ENCODE measurements at regions of chr3 and their contacts with region 1.

Region 1: DNA sequence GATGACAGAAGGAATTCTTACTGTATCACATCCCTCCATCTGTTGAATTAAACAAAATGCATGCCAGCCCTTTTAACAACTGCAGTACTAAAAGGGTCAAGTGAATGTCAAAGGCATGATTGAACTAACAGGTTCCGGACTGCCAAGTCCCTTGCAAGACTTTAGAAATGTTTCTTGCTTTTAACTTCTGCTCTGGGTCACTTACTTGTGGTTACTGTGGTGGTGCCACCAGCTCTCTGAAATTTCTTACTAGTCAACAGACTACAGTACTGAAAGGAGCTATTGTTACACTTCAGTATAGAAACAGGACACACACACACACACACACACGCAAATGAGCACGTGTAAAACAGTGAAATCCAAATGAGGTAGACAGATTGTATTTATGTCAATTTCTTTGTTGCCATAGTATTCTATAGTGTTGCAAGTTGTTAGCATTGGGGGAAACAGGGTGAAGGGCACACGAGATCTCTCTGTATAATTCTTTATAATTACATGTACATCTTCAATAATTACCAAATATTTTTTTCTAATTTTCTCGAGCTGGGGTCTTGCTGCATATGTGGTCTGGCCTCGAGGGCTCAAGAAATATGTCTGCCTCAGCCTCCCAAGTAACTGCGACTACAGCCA is 79.9 kb upstream of the SLC25A26 start:
- DNase-seq: no peak
- ATAC-seq: no peak
- H3K4me3 ChIP-seq: no peak overlapping the region
- H3K27ac ChIP-seq: no peak overlapping the region
- H3K4me1 ChIP-seq: no peaks in the 10 kb centered on the region
- H3K27me3 ChIP-seq: no peaks in the 10 kb centered on the region
- CTCF ChIP-seq: no peak

Region 2: GRCh38 chr3:65561617-65562016 is 579.2 kb before region 1 on chr3:
- intact Hi-C with region 1: no loop called
- DNase-seq: no peak
- ATAC-seq: no peak
- H3K4me3 ChIP-seq: no peak overlapping the region
- H3K27ac ChIP-seq: no peak overlapping the region
- H3K4me1 ChIP-seq: no peaks in the 10 kb centered on the region
- H3K27me3 ChIP-seq: no peaks in the 10 kb centered on the region
- CTCF ChIP-seq: no peak

Region 3: GRCh38 chr3:65785065-65785645 is 355.7 kb before region 1 on chr3:
- intact Hi-C with region 1: loop called (anchors 10 kb)
- DNase-seq: no peak
- ATAC-seq: peak; percentile 60
- H3K4me3 ChIP-seq: no peak overlapping the region
- H3K27ac ChIP-seq: no peak overlapping the region
- H3K4me1 ChIP-seq: peaks cover 14% of the 10 kb centered on the region
- H3K27me3 ChIP-seq: no peaks in the 10 kb centered on the region
- CTCF ChIP-seq: peak; percentile 83

Measured in upper lobe of right lung (tissue), 1 donor.